ENCODE measurements at regions of chr4 and their contacts with region 1.

Region 1: DNA sequence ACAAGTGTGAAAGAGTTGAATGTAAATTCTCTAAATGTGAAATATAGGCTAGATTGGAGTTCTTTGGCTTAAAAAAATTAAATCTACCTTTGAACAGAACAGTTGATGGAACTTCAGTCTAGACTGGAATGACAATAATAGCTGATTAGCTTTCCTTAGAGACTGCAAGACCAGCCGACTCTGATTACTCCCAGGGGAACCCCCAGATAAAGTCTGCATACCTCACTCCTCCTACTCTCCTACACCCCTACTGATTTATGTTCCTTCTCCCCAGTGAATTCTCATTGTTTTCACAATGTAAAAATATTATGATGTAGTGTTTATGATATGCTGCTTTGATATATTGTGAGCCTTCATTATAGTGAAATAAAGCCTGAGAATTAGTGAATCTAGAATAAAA is 241.3 kb downstream of the CFAP299 start:
- DNase-seq: no peak
- ATAC-seq: no peak
- H3K4me3 ChIP-seq: no peak overlapping the region
- H3K4me3 Mint-ChIP-seq: no peak overlapping the region
- H3K27ac ChIP-seq: no peak overlapping the region
- H3K27ac Mint-ChIP-seq: no peak overlapping the region
- H3K4me1 ChIP-seq: no peaks in the 10 kb centered on the region
- H3K4me1 Mint-ChIP-seq: peaks cover 2% of the 10 kb centered on the region
- H3K27me3 ChIP-seq: peaks cover 0 to 4% (median 0%) of the 10 kb centered on the region in 4 experiments
- H3K27me3 Mint-ChIP-seq: no peaks in the 10 kb centered on the region
- CTCF ChIP-seq: no peak

Region 2: DNA sequence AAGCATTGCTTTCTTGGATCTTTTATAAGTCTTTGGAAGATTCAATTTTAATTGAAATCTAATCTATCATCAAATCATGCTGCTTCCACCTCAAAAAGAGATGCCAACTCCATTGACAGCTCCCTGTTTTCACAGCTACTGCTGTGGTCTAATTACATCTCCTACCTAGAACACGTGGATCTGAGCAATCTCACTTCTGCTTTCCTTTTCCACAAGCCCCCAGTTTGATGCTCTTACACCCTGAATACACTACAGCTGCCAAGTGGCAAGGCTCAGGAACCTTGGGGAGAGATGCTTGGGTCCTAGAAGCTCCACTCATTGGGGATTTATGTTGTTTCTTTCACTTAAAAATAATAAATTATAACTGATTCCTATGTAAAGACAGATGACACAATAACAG is 69.3 kb before region 1 on chr4:
- CTCF ChIA-PET with region 1: no interaction called
- POLR2A ChIA-PET with region 1: no interaction called
- intact Hi-C with region 1: loop called (anchors 5 kb)
- DNase-seq: peak; percentile 45
- ATAC-seq: peak; percentile 56
- H3K4me3 ChIP-seq: no peak overlapping the region
- H3K4me3 Mint-ChIP-seq: no peak overlapping the region
- H3K27ac ChIP-seq: no peak overlapping the region
- H3K27ac Mint-ChIP-seq: no peak overlapping the region
- H3K4me1 ChIP-seq: peaks cover 4 to 13% of the 10 kb centered on the region in 2 donors
- H3K4me1 Mint-ChIP-seq: peaks cover 13% of the 10 kb centered on the region
- H3K27me3 ChIP-seq: no peaks in the 10 kb centered on the region
- H3K27me3 Mint-ChIP-seq: no peaks in the 10 kb centered on the region
- CTCF ChIP-seq: no peak

Measured in B cell (primary cell).